ENCODE measurements at regions of chr12 and their contacts with region 1.

Region 1: GRCh38 chr12:122526683-122527477 is at the starts of genes KNTC1 and RSRC2:
- DNase-seq: peak; percentile 93 to 99
- ATAC-seq: peak; percentile 91 to 98 (median 92)
- H3K4me3 ChIP-seq: peak within 1 kb of the TSS; percentile 64
- H3K4me3 Mint-ChIP-seq: no peak within 1 kb of the TSS
- H3K27ac ChIP-seq: peak within 1 kb of the TSS; percentile 95
- H3K27ac Mint-ChIP-seq: no peak within 1 kb of the TSS
- H3K4me1 ChIP-seq: peaks cover 20% of the 10 kb centered on the region
- H3K4me1 Mint-ChIP-seq: peaks cover 29% of the 10 kb centered on the region in 2 donors
- H3K27me3 ChIP-seq: no peaks in the 10 kb centered on the region
- H3K27me3 Mint-ChIP-seq: no peaks in the 10 kb centered on the region
- CTCF ChIP-seq: no peak
- total RNA-seq, gene KNTC1: 31.3 to 33.8 (median 33.2) TPM
- total RNA-seq, gene RSRC2: 252 to 310 (median 266) TPM

Region 2: DNA sequence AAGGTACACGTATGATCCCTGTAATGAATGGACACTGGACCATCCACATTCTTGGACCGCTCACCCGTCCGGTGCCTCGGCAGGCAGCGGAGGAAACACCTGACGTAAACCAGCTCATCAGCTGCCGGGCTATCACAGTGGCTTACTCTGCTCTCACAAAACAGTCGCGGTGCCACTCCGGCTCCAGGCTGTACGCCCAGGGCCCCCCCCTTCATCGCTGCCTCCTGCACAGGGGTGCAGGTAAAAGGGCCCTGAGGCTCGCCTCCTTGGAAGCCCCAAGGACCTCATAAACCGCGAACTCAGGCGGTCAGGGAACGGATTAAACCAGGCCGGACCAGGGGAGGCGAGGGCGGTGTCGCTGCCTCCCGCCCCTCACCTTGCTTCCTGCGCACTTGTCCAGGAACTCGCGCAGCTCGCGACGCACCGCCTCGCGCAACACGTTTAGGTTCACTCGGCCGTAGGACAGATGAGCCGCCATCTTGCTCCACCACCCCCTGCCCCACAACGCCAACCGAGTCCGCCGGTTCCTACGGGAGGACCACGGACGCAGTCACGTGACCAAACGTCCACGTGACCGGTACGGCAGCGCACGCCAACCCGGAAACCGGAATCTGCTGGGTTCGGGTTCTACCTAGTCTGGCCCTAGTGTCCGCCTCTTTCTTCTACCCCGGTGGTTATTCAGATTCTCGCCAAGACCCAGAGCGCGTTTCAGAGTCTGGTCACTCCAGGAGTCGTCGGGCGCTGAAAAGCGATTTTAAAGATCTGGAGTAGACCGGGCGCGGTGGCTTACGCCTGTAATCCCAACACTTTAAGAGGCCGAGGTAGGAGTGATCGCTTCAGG is 260.7 kb before region 1 on chr12 and contains the start of gene VPS33A:
- intact Hi-C with region 1: loop called (anchors 5 kb)
- DNase-seq: peak; percentile 91 to 97
- ATAC-seq: peak; percentile 86 to 95 (median 89)
- H3K4me3 ChIP-seq: peak within 1 kb of the TSS; percentile 86
- H3K4me3 Mint-ChIP-seq: peak within 1 kb of the TSS; percentile 97
- H3K27ac ChIP-seq: peak within 1 kb of the TSS; percentile 94
- H3K27ac Mint-ChIP-seq: peak within 1 kb of the TSS; percentile 98 to 99
- H3K4me1 ChIP-seq: peaks cover 16% of the 10 kb centered on the region
- H3K4me1 Mint-ChIP-seq: peaks cover 10 to 16% of the 10 kb centered on the region in 2 donors
- H3K27me3 ChIP-seq: no peaks in the 10 kb centered on the region
- H3K27me3 Mint-ChIP-seq: peaks cover 0 to 2% of the 10 kb centered on the region in 2 donors
- CTCF ChIP-seq: no peak
- total RNA-seq, gene VPS33A: 19.2 to 26.3 (median 24.1) TPM

Region 3: DNA sequence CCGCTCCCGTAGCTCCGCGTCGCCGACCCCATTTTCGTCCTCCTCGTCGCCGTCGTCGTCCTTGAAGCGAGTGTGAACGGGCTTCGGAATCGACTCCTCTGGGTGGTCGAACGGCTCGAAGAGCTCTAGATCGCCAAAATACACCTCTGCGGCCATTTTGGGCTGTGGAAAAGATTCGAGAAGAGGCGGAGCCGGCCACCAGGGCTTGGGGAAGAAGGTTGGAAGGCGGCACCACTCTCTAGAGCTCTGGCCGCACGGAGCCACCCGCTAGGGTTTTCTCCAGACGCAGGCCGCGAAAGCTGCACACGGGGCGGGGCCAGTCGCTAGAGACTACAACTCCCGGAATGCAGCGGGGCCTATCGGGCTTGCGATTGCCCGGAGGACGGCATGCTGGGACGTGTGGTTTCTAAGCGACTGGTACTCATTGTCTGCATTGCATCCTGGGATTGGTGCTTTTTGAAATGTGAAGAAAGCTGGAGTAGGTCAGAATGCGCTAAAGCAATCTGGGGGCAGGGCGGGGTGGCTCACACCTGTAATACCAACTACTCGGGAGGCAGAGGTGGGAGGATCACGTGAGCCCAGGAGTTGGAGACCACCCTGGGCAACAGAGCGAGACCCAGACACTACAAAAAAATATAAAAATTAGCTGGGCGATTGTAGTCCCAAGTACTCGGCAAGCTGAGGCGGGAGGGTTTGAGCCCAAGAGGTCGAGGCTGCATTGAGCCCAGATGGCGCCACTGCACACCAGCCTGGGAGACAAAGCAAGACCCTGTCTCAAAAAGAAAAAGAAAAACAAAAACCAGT is 26.0 kb before region 1 on chr12 and contains the start of gene ZCCHC8:
- intact Hi-C with region 1: loop called (anchors 1 kb)
- DNase-seq: peak; percentile 92 to 98
- ATAC-seq: peak; percentile 93 to 99 (median 94)
- H3K4me3 ChIP-seq: peak within 1 kb of the TSS; percentile 83
- H3K4me3 Mint-ChIP-seq: peak within 1 kb of the TSS; percentile 98
- H3K27ac ChIP-seq: peak within 1 kb of the TSS; percentile 96
- H3K27ac Mint-ChIP-seq: peak within 1 kb of the TSS; percentile 95 to 97
- H3K4me1 ChIP-seq: peaks cover 26% of the 10 kb centered on the region
- H3K4me1 Mint-ChIP-seq: peaks cover 19 to 30% of the 10 kb centered on the region in 2 donors
- H3K27me3 ChIP-seq: no peaks in the 10 kb centered on the region
- H3K27me3 Mint-ChIP-seq: no peaks in the 10 kb centered on the region
- CTCF ChIP-seq: no peak
- total RNA-seq, gene ZCCHC8: 57.7 to 71.6 (median 66.6) TPM

Region 4: GRCh38 chr12:122752464-122753318 is 225.8 kb after region 1 on chr12 and contains the start of gene DENR:
- intact Hi-C with region 1: loop called (anchors 5 kb)
- DNase-seq: peak; percentile 99
- ATAC-seq: peak; percentile 93 to 99 (median 94)
- H3K4me3 ChIP-seq: peak within 1 kb of the TSS; percentile 91
- H3K4me3 Mint-ChIP-seq: peak within 1 kb of the TSS; percentile 92
- H3K27ac ChIP-seq: peak within 1 kb of the TSS; percentile 91
- H3K27ac Mint-ChIP-seq: peak within 1 kb of the TSS; percentile 82 to 95
- H3K4me1 ChIP-seq: peaks cover 15% of the 10 kb centered on the region
- H3K4me1 Mint-ChIP-seq: peaks cover 32 to 35% of the 10 kb centered on the region in 2 donors
- H3K27me3 ChIP-seq: no peaks in the 10 kb centered on the region
- H3K27me3 Mint-ChIP-seq: no peaks in the 10 kb centered on the region
- CTCF ChIP-seq: peak; percentile 55
- total RNA-seq, gene DENR: 30.5 to 42.9 (median 42.7) TPM

Region 5: GRCh38 chr12:122961531-122962329 is 434.9 kb after region 1 on chr12:
- intact Hi-C with region 1: no loop called
- DNase-seq: no peak
- ATAC-seq: no peak
- H3K4me3 ChIP-seq: no peak overlapping the region
- H3K4me3 Mint-ChIP-seq: no peak overlapping the region
- H3K27ac ChIP-seq: no peak overlapping the region
- H3K27ac Mint-ChIP-seq: no peak overlapping the region
- H3K4me1 ChIP-seq: peaks cover 16% of the 10 kb centered on the region
- H3K4me1 Mint-ChIP-seq: peaks cover under 1 to 2% of the 10 kb centered on the region in 2 donors
- H3K27me3 ChIP-seq: no peaks in the 10 kb centered on the region
- H3K27me3 Mint-ChIP-seq: no peaks in the 10 kb centered on the region
- CTCF ChIP-seq: no peak